CD4-positive, alpha-beta T cell (primary cell): ENCODE measurements at regions of chr1 and their contacts with region 1.

Region 1: DNA sequence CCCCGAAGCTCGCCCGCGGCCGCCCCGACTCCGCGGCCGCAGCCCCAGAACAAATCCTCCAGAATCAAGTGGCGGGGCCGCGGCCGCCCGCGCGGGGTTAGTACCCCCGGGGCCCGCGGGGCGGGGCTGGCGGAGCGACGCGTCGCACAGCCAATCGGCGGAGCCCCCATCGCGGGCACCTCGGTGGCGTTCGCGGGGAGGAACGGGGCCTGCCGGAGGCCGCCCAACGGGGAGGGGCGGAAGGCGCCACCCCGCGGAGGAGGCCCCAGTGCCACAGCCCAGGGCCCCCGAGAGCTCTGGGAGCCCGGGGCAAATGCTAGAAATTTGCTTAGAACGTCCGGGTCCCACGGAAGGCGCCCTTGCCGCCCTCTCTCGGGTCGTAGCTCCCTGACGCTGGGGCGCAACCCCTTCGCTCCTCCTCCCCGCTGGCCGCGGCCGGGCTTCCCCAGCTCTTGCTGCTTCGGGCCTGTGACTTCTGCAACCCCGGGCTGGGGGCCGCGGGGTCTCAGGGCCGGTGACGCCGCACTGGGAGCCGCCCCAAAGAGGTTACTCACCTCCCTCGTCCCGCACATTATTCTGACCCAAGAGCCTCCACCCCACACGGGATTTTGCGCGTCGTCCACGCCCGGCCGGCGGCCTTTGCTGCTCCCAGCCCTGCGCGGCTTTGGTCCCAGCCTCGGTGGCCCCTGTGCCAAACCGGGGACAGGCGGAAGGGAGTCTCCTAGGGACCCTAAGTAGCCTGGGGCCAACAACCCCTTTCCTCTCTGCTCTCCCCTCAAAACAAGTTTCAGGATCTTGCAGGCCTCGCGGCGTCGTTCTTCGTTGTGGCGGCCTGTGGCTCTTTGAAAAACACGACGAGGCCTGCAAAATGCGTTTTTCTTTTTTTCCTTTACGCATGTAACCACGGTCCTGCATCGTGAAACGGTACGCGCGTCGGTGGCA is at the start of gene RUNX3:
- DNase-seq: peak; percentile 83 to 97 (median 92)
- ATAC-seq: peak; percentile 81
- H3K4me3 ChIP-seq: peak within 1 kb of the TSS; percentile 83
- H3K4me3 Mint-ChIP-seq: peak within 1 kb of the TSS; percentile 99
- H3K27ac ChIP-seq: peak within 1 kb of the TSS; percentile 91 to 95
- H3K27ac Mint-ChIP-seq: peak within 1 kb of the TSS; percentile 98
- H3K4me1 ChIP-seq: peaks cover 67% of the 10 kb centered on the region
- H3K4me1 Mint-ChIP-seq: peaks cover 61% of the 10 kb centered on the region
- H3K27me3 ChIP-seq: no peaks in the 10 kb centered on the region
- H3K27me3 Mint-ChIP-seq: no peaks in the 10 kb centered on the region
- CTCF ChIP-seq: peak; percentile 14
- total RNA-seq, gene RUNX3: 202 to 209 TPM

Region 2: DNA sequence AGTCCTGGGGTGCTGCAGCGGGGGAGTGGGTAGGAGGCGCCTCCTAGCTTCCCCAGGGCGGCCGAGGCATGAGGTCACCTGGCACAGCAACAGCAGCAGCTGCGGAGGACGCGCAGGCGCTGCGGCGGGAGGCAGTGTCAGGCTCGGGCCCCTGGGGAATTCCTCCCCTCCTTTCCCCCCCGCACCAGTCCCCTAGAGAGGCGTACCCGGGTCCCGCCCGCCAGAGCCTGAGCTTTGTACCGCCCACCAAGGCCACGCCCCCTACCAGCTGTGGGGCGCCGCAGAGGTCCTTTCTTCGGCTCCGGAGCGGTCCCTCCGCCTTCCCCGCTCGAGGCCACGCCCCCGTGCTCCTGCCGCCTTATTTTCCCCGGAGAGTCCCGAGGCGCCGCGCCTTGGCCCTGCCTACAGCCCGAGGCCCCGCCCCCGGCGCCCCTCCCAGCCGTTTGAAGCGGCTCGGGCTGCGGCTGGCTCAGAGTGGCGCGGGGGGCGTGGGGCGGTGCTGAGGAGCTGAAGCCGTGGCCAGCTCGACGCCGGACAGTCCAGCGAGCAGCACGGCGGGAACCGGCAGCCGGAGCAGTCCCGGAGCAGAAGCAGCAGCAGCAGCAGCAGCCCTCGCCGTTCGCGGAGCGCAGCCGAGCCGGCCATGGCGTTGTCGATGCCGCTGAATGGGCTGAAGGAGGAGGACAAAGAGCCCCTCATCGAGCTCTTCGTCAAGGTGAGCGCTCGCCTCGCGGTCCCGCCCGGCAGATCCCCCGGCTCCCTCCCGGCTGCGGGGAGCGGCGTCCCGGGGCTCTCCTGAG is 185.4 kb before region 1 on chr1 and contains the start of gene CLIC4:
- CTCF ChIA-PET with region 1: no interaction called
- POLR2A ChIA-PET with region 1: interaction called, 6 read pairs
- intact Hi-C with region 1: loop called in 1 of 2 experiments (anchors 2 kb)
- DNase-seq: peak; percentile 98 to 100 (median 99)
- ATAC-seq: peak; percentile 87
- H3K4me3 ChIP-seq: peak within 1 kb of the TSS; percentile 58
- H3K4me3 Mint-ChIP-seq: peak within 1 kb of the TSS; percentile 93
- H3K27ac ChIP-seq: no peak within 1 kb of the TSS
- H3K27ac Mint-ChIP-seq: peak within 1 kb of the TSS; percentile 80
- H3K4me1 ChIP-seq: peaks cover 15% of the 10 kb centered on the region
- H3K4me1 Mint-ChIP-seq: peaks cover 18% of the 10 kb centered on the region
- H3K27me3 ChIP-seq: peaks cover 0 to 3% of the 10 kb centered on the region in 2 experiments
- H3K27me3 Mint-ChIP-seq: no peaks in the 10 kb centered on the region
- CTCF ChIP-seq: no peak
- total RNA-seq, gene CLIC4: 1.1 to 1.3 TPM

Region 3: DNA sequence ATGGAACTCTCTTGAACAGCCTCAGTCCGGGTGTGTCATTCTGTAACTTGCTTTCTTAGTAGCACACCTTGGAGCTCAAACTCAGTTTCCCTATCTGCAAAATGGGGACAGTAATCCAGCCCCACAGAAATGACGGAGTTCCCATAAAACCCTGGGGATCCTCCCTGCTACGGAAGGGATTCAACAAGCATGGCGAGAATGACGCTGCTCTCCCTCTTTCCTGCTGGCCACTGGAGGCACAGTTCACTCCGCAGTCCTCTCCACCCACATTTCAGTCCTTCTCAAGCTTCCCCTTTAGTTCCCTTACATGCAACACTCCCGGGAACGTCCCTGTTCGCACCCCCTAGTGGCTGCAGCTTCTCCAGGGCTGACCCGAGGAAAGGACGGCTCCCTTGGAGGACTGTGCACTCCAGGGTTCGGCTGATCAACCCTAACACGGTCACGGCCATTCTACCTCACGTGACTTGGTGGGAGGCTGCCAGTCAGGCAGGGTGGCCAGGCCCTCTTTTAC is 21.0 kb before region 1 on chr1:
- CTCF ChIA-PET with region 1: interaction called, 5 read pairs
- POLR2A ChIA-PET with region 1: interaction called, 121 read pairs
- intact Hi-C with region 1: loop called in 1 of 2 experiments (anchors 2 kb)
- DNase-seq: peak in 3 of 14 experiments; percentile 1 to 56 (median 40)
- ATAC-seq: no peak
- H3K4me3 ChIP-seq: no peak overlapping the region
- H3K4me3 Mint-ChIP-seq: no peak overlapping the region
- H3K27ac ChIP-seq: no peak overlapping the region
- H3K27ac Mint-ChIP-seq: peak overlapping the region; percentile 99
- H3K4me1 ChIP-seq: peaks cover 95% of the 10 kb centered on the region
- H3K4me1 Mint-ChIP-seq: peaks cover 34% of the 10 kb centered on the region
- H3K27me3 ChIP-seq: no peaks in the 10 kb centered on the region
- H3K27me3 Mint-ChIP-seq: no peaks in the 10 kb centered on the region
- CTCF ChIP-seq: no peak

Region 4: GRCh38 chr1:24964811-24965570 is 34.5 kb after region 1 on chr1:
- CTCF ChIA-PET with region 1: interaction called, 9 read pairs
- POLR2A ChIA-PET with region 1: interaction called, 18 read pairs
- intact Hi-C with region 1: loop called (anchors 2 kb)
- DNase-seq: peak; percentile 68 to 97 (median 80)
- ATAC-seq: peak; percentile 93
- H3K4me3 ChIP-seq: peak overlapping the region; percentile 55
- H3K4me3 Mint-ChIP-seq: peak overlapping the region; percentile 79
- H3K27ac ChIP-seq: peak overlapping the region; percentile 75 to 85
- H3K27ac Mint-ChIP-seq: peak overlapping the region; percentile 88
- H3K4me1 ChIP-seq: peaks cover 76% of the 10 kb centered on the region
- H3K4me1 Mint-ChIP-seq: peaks cover 63% of the 10 kb centered on the region
- H3K27me3 ChIP-seq: no peaks in the 10 kb centered on the region
- H3K27me3 Mint-ChIP-seq: no peaks in the 10 kb centered on the region
- CTCF ChIP-seq: no peak

Region 5: DNA sequence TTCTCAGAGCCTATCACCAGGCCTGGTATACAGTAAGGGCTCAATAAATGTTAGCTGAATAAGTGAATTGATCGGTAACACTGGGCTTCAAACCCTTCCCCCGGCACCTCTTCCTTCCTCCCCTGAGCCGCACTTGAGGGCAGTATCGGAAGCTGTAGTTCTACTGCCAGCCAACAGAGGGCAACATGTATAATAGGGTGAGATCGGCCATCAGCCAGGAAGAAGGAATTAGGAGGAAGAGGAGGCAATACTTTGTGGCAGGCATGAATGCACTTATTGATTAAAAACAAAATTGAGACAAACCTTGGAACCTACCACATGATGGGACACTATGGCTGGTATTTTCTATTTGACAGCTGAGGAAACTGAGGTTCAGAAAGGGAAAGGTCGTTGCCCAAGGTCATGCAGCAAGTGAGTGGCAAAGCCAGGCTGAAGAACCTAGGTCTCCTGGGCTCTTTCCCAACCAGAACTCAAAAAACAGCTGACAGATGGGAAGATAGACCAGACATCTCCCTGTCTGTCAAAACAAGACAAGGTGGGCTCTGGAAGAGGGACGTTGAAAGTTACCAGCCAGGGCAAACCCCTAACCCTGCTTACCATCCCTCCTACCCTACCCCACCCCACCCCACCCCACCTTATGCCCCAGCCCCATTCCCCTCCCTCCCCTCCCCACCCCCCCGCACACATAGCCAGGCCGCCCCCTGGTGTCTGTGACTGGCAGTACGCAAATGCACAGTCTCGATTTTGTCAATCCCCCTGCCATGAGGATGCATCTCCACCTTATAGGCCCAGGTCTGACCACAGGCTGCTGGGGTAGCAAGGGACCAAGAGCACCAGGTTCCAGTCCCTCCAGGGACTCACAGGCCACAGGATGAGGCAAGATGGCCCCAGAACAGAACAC is 106.9 kb after region 1 on chr1:
- CTCF ChIA-PET with region 1: interaction called, 52 read pairs
- POLR2A ChIA-PET with region 1: interaction called, 29 read pairs
- intact Hi-C with region 1: loop called (anchors 1 kb)
- DNase-seq: peak; percentile 52 to 84 (median 63)
- ATAC-seq: peak; percentile 77
- H3K4me3 ChIP-seq: no peak overlapping the region
- H3K4me3 Mint-ChIP-seq: peak overlapping the region; percentile 4
- H3K27ac ChIP-seq: no peak overlapping the region
- H3K27ac Mint-ChIP-seq: peak overlapping the region; percentile 28
- H3K4me1 ChIP-seq: peaks cover 56% of the 10 kb centered on the region
- H3K4me1 Mint-ChIP-seq: peaks cover 30% of the 10 kb centered on the region
- H3K27me3 ChIP-seq: no peaks in the 10 kb centered on the region
- H3K27me3 Mint-ChIP-seq: no peaks in the 10 kb centered on the region
- CTCF ChIP-seq: peak; percentile 72

Region 6: GRCh38 chr1:25204797-25205480 is 274.5 kb after region 1 on chr1:
- CTCF ChIA-PET with region 1: no interaction called
- POLR2A ChIA-PET with region 1: no interaction called
- intact Hi-C with region 1: loop called (anchors 5 kb)
- DNase-seq: peak in 6 of 14 experiments; percentile 6 to 73 (median 34)
- ATAC-seq: peak; percentile 74
- H3K4me3 ChIP-seq: no peak overlapping the region
- H3K4me3 Mint-ChIP-seq: no peak overlapping the region
- H3K27ac ChIP-seq: no peak overlapping the region
- H3K27ac Mint-ChIP-seq: no peak overlapping the region
- H3K4me1 ChIP-seq: peaks cover 3% of the 10 kb centered on the region
- H3K4me1 Mint-ChIP-seq: no peaks in the 10 kb centered on the region
- H3K27me3 ChIP-seq: no peaks in the 10 kb centered on the region
- H3K27me3 Mint-ChIP-seq: no peaks in the 10 kb centered on the region
- CTCF ChIP-seq: peak; percentile 88